Dendritic cell treated with granulocyte-macrophage colony-stimulating factor and Interleukin-4, amounts not matched to agents 40 ng/mL and 50 ng/mL, for 4 days (primary cell): ENCODE measurements at regions of chr1 and their contacts with region 1.

Region 1: GRCh38 chr1:111399792-111400610 is 27.5 kb downstream of the OVGP1 start:
- H3K4me3 Mint-ChIP-seq: no peak overlapping the region
- H3K27ac Mint-ChIP-seq: no peak overlapping the region
- H3K4me1 Mint-ChIP-seq: peaks cover 6% of the 10 kb centered on the region
- H3K27me3 Mint-ChIP-seq: peaks cover 35% of the 10 kb centered on the region

Region 2: DNA sequence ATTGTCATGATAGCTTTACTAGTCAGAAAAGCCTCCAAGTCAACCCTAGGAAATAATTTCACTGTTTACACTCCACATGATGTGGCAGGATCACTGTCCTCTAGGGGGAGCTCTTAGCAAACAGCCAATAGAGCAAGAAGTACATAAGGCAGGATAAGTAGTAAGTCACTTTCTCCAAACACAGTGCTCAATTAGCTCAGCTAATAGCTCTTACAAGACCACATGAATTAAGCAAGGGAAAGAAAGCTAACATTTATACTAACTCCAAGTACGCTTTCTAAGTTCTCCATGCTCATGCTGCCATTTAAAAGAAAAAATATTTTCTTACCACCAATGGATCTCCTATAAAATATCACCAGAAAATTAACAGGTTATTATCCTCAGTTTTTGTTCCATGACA is 369.4 kb before region 1 on chr1:
- intact Hi-C with region 1: loop called (anchors 2 kb)
- H3K4me3 Mint-ChIP-seq: no peak overlapping the region
- H3K27ac Mint-ChIP-seq: no peak overlapping the region
- H3K4me1 Mint-ChIP-seq: no peaks in the 10 kb centered on the region
- H3K27me3 Mint-ChIP-seq: peaks cover 36% of the 10 kb centered on the region

Region 3: GRCh38 chr1:111570781-111571181 is 170.8 kb after region 1 on chr1:
- intact Hi-C with region 1: no loop called
- H3K4me3 Mint-ChIP-seq: no peak overlapping the region
- H3K27ac Mint-ChIP-seq: peak overlapping the region; percentile 20
- H3K4me1 Mint-ChIP-seq: peaks cover 15% of the 10 kb centered on the region
- H3K27me3 Mint-ChIP-seq: peaks cover 1% of the 10 kb centered on the region